ENCODE measurements at regions of chr2 and their contacts with region 1.

Region 1: GRCh38 chr2:216013080-216013909 is at the start of gene MREG:
- DNase-seq: peak; percentile 81
- H3K4me3 ChIP-seq: peak within 1 kb of the TSS; percentile 70 to 75
- H3K27ac ChIP-seq: peak within 1 kb of the TSS; percentile 69 to 73
- H3K4me1 ChIP-seq: peaks cover 6% of the 10 kb centered on the region
- H3K27me3 ChIP-seq: no peaks in the 10 kb centered on the region
- CTCF ChIP-seq: peak in 2 of 3 experiments; percentile 53 to 65
- POLR2A ChIP-seq: no peak
- total RNA-seq, gene MREG: 4.3 to 5.2 TPM

Region 2: DNA sequence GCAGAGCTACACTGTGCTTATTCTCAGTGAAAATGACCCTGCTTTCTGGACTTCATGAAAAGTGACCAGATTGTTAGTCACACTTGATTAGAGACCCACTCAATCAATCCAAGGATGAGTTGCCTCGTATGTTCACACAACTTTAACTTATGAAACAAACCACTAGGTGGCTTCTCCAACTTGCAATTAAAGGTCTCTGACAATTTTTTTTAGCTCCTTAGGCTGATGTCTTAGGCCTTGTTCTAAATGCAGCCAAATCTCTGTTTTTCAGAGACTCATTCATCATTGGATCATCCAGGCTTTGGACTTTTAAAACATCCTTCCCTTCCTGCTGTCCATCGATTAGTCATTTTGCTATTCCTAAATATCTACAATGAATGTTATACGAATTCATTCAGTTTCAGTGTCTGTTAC is 63.3 kb before region 1 on chr2:
- intact Hi-C with region 1: loop called (anchors 10 kb)
- DNase-seq: no peak
- H3K4me3 ChIP-seq: no peak overlapping the region
- H3K27ac ChIP-seq: no peak overlapping the region
- H3K4me1 ChIP-seq: no peaks in the 10 kb centered on the region
- H3K27me3 ChIP-seq: no peaks in the 10 kb centered on the region
- CTCF ChIP-seq: peak; percentile 7 to 63 (median 49)
- POLR2A ChIP-seq: no peak

Region 3: GRCh38 chr2:216139884-216140283 is 126.6 kb after region 1 on chr2:
- intact Hi-C with region 1: no loop called
- DNase-seq: no peak
- H3K4me3 ChIP-seq: no peak overlapping the region
- H3K27ac ChIP-seq: no peak overlapping the region
- H3K4me1 ChIP-seq: no peaks in the 10 kb centered on the region
- H3K27me3 ChIP-seq: no peaks in the 10 kb centered on the region
- CTCF ChIP-seq: no peak
- POLR2A ChIP-seq: no peak

Region 4: GRCh38 chr2:216181351-216181750 is 168.1 kb after region 1 on chr2:
- intact Hi-C with region 1: no loop called
- DNase-seq: no peak
- H3K4me3 ChIP-seq: no peak overlapping the region
- H3K27ac ChIP-seq: no peak overlapping the region
- H3K4me1 ChIP-seq: peaks cover 7% of the 10 kb centered on the region
- H3K27me3 ChIP-seq: no peaks in the 10 kb centered on the region
- CTCF ChIP-seq: no peak
- POLR2A ChIP-seq: no peak

Measured in testis (tissue), 5 donors.